AG04450 (cell line): ENCODE measurements at regions of chr12 and their contacts with region 1.

Region 1: DNA sequence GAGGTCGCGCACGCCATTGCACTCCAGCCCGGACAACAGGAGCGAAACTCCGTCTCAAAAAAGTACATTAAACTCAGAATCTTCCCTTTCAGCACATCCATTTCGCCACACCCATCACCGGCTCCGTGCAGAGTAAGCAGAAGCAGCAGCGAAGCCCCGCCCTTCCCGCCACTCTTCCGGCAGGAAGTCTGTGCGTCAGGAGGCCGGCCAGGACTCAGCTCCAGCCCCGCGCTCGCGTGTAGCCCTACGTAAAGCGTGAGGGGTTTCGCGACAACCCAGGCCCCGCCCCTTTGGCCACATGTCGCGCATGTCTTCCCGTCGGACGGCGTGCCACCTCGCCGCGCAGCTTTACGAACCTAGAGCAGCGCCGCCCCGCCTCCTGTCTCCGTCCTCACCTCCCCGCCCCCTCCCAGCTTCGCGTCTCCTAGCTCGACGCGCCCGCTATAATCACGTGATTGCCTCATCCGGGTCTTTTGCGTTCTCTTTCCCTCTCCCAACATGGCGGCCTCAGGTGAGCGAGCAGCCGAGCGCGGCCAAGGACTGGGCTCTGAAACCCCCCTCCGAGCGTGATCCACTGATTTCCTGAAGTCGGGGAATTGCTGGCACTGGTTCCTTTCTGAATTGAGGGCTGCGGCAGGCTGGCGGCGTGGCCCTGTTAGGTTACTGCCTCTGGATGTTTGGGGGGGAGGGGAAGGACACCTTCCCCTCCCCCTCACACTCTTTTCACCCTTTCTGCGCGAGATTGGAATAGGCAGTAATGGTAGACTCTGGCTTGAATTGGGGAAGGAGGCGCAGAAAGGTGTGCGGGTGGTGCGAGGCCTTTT is at the start of gene EIF4B:
- DNase-seq: peak; percentile 99
- H3K4me3 ChIP-seq: peak within 1 kb of the TSS; percentile 100
- H3K27ac ChIP-seq: peak within 1 kb of the TSS; percentile 87
- H3K27me3 ChIP-seq: no peaks in the 10 kb centered on the region
- CTCF ChIP-seq: no peak
- polyA plus RNA-seq, gene EIF4B: 548 and 645 TPM in 2 replicates

Region 2: GRCh38 chr12:52181746-52182145 is 824.5 kb before region 1 on chr12:
- CTCF ChIA-PET with region 1: no interaction called
- POLR2A ChIA-PET with region 1: interaction called, 11 read pairs
- DNase-seq: peak; percentile 58
- H3K4me3 ChIP-seq: no peak overlapping the region
- H3K27ac ChIP-seq: peak overlapping the region; percentile 94
- H3K27me3 ChIP-seq: no peaks in the 10 kb centered on the region
- CTCF ChIP-seq: no peak

Region 3: DNA sequence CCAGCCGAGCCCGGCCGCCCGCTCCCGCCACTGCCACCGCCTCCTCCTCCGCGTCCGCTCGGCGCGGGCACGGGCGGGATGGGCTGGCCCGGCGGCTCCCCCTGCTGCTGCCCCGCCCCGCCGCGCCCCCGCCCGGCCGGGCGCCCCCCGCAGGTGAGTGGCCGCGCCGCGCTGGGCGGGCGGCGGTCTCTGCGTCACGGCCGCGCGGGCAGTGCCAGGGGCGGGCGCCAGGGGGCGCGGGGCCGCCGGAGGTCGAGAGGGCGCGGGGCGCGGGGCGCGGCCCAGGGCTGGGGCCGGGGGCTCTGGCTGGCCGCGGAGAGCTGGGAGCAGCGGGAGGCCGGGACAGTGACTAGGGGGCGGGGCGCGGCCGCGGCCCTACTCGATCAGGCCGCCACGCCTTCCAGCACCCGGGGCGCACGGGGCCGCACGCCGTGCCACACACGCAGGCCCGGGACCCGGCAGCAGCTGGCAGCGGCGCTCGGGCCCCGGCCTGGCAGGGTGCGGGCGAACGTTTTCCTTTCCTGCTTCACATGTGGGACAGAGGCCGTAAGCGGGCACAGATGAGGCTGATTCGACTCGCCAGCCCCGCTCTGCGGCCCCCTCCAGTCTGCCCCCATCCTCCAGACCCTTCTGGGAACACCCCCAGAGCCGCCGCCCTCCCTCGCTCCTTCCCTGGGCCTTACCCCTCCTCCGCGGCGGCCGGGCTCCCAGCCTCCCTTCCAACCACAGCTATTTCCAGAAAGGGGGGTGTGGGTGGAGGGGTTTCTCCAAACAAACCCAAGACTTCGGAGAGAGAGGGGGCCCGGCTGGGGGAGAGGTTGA is 41.2 kb after region 1 on chr12:
- CTCF ChIA-PET with region 1: no interaction called
- POLR2A ChIA-PET with region 1: interaction called, 15 read pairs
- DNase-seq: no peak
- H3K4me3 ChIP-seq: peak overlapping the region; percentile 86
- H3K27ac ChIP-seq: peak overlapping the region; percentile 94
- H3K27me3 ChIP-seq: no peaks in the 10 kb centered on the region
- CTCF ChIP-seq: no peak

Region 4: GRCh38 chr12:53213348-53213747 is 207.2 kb after region 1 on chr12:
- CTCF ChIA-PET with region 1: no interaction called
- POLR2A ChIA-PET with region 1: no interaction called
- DNase-seq: no peak
- H3K4me3 ChIP-seq: no peak overlapping the region
- H3K27ac ChIP-seq: no peak overlapping the region
- H3K27me3 ChIP-seq: no peaks in the 10 kb centered on the region
- CTCF ChIP-seq: peak; percentile 92